ENCODE measurements at regions of chr19 and their contacts with region 1.

Region 1: DNA sequence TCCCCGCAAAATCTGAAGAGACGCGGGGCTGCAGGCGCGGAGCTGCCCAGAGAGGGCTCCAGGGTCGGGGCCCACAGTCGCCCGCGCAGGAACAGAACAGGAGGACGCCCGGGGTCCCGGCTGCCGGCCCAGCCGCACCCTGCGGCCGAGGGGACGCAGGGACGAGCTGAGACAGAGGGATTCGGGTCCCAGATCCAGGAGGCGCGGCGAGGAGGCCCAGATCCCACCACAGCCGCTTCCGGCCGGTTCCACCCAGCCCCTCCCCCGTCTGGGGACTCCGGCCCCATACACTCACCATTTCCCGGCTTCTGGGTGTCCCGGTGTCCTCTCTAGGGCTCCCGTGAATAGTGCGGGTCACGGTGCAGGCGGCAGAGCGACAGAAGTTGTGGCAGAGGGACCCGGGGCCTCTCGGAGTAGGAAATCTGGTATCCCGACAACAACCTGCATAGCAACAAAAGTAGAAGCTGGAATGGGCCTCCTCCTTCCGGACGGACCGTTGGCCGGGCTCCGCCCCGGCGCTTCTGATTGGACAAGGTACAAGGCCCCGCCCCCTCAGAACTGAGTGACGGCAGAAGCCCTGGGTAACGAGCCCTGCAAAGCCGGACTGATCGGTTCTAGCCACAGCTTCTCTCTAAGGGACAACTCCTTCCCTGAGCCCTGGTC is at the start of gene ZNF20:
- DNase-seq: peak; percentile 95
- ATAC-seq: peak; percentile 97
- H3K4me3 Mint-ChIP-seq: peak within 1 kb of the TSS; percentile 94
- H3K27ac Mint-ChIP-seq: peak within 1 kb of the TSS; percentile 87
- H3K4me1 Mint-ChIP-seq: peaks cover 35% of the 10 kb centered on the region
- H3K27me3 Mint-ChIP-seq: no peaks in the 10 kb centered on the region
- total RNA-seq, gene ZNF20: 3.2 to 4.1 TPM

Region 2: DNA sequence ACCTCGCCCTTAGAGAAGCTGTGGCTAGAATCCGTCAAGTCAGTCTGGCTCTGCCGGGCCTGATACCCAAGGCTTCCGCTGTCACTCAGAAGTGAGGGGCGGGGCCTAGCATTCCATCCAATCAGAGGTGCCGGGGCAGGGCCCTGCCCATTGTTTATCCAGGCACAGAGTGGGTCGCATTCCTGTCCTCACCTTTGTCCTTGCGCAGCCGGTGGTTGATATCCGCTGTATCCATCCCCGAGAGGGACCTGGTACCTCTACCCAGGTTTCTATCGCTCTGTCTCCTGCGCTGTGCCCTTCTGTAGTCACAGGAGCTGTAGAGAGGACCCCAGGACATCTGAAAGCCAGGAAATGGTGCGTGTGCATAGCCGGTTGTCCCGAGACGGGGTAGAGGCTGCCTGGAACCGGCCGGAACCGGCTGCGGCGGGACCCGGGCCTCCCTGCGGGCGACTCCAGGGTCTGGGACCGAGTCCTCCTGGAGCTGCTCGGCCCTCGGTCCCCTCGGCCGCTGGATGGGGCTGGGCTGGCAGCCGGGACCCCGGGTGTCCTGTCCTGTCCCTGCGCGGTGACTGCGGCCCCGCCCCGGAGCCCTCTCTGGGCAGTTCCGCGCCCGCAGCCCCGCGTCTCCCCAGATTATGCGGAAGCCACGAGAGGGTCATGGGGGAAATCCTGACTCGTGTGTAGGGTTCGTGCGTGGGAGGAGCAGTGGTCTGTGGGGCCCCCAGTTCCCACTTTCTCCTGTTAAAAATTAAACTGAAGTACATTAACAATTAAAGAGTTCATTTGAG is 175.0 kb before region 1 on chr19 and contains the start of gene ZNF763:
- CTCF ChIA-PET with region 1: interaction called, 24 read pairs
- POLR2A ChIA-PET with region 1: interaction called, 3 read pairs
- DNase-seq: peak; percentile 94
- ATAC-seq: peak; percentile 97
- H3K4me3 Mint-ChIP-seq: peak within 1 kb of the TSS; percentile 88
- H3K27ac Mint-ChIP-seq: peak within 1 kb of the TSS; percentile 88
- H3K4me1 Mint-ChIP-seq: peaks cover 27% of the 10 kb centered on the region
- H3K27me3 Mint-ChIP-seq: no peaks in the 10 kb centered on the region
- total RNA-seq, gene ZNF763: 2.0 to 2.3 TPM

Region 3: DNA sequence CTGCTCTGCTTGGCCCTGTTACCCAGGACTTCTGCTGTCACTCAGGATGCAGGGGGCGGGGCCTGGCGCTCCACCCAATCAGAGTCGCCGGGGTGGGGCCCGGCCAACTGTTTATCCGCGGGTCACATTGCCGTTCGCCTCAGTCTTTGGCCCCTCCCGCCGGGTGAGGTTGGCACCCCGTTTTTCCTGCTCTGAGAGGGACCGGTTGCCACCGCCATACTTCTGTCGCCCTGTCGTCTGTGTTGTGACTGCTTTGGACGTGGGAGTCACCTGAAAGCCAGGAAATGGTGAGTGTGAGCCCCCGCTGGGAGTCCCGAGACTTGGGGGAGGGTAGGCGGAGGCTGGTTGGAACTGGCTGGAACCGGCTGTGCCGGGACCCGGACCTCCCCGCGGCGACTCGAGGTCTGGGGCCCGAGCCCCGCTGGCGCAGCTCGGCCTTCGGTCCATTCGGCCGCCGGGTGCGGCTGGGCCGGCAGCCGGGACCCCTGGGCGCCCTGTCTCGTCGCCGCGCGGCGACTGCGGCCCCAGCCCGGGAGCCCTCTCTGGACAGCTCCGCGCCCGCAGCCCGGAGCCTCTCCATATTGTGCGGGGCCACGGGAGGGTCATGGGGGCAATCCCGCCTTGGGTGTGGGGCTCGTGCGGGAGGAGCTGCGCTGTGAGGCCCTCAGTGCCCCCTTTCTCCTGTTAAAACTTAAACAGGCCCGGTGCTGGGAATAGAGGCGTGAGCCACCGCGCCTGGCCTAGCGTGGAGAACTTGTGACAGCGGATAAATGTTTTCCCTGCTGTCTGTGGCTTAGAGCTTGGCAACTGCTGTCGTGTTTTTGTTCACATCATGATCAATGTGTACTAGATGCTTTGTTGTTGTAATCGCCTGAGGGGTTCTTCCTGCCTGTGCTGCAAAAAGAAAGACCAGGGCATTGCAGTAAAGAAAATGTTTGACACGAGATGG is 75.2 kb before region 1 on chr19 and contains the start of gene ZNF844:
- CTCF ChIA-PET with region 1: interaction called, 50 read pairs
- POLR2A ChIA-PET with region 1: interaction called, 9 read pairs
- DNase-seq: peak; percentile 78
- ATAC-seq: peak; percentile 79
- H3K4me3 Mint-ChIP-seq: peak within 1 kb of the TSS; percentile 79
- H3K27ac Mint-ChIP-seq: peak within 1 kb of the TSS; percentile 82
- H3K4me1 Mint-ChIP-seq: peaks cover 3% of the 10 kb centered on the region
- H3K27me3 Mint-ChIP-seq: no peaks in the 10 kb centered on the region
- total RNA-seq, gene ZNF844: 1.7 to 2.4 TPM

Region 4: DNA sequence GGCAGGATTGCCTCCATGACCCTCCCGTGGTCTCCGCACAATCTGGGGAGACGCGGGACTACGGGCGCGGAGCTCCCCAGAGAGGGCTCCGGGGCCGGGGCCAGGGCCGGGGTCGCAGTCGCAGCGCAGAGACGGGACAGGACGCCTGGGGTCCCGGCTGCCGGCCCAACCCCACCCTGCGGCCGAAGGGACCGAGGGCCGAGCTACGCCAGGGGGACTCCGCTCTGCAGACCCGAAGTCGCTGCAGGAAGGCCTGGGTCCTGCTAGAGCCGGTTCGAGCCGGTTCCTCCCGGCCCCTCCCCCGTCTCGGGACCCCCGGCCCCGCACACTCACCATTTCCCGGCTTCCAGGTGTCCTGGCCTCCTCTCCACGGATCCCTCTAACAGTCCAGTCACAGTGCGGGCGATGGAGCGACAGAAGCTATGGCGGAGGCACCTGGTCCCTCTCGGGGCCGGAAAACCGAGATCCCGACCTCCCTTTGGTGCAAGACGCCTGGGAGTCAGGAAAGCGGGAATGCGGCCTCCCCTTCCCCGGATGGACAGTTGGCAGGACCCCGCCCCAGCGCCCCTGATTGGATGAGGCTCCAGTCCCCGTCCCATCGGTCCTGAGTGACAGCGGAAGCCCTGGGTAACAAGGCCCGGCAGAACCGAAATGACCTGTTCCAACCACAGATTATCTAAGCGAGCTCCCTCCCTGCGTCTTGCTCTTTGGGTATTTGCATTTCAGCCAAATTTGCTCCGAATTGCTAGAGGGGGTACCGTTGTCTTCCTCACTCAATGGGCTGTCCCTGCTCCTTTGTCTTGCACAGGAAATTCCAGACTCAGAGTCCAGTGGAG is 16.4 kb after region 1 on chr19 and contains the start of gene ZNF625:
- CTCF ChIA-PET with region 1: interaction called, 10 read pairs
- POLR2A ChIA-PET with region 1: no interaction called
- DNase-seq: peak; percentile 63
- ATAC-seq: peak; percentile 71
- H3K4me3 Mint-ChIP-seq: peak within 1 kb of the TSS; percentile 87
- H3K27ac Mint-ChIP-seq: peak within 1 kb of the TSS; percentile 78
- H3K4me1 Mint-ChIP-seq: peaks cover 15% of the 10 kb centered on the region
- H3K27me3 Mint-ChIP-seq: peaks cover 3% of the 10 kb centered on the region
- total RNA-seq, gene ZNF625: 2.9 to 5.2 TPM

Region 5: GRCh38 chr19:12162882-12163806 is 23.1 kb after region 1 on chr19 and contains the start of gene ZNF136:
- CTCF ChIA-PET with region 1: interaction called, 10 read pairs
- POLR2A ChIA-PET with region 1: interaction called, 11 read pairs
- DNase-seq: peak; percentile 98
- ATAC-seq: peak; percentile 99
- H3K4me3 Mint-ChIP-seq: peak within 1 kb of the TSS; percentile 90
- H3K27ac Mint-ChIP-seq: peak within 1 kb of the TSS; percentile 94
- H3K4me1 Mint-ChIP-seq: peaks cover 42% of the 10 kb centered on the region
- H3K27me3 Mint-ChIP-seq: no peaks in the 10 kb centered on the region
- total RNA-seq, gene ZNF136: 13.9 to 14.7 TPM

Region 6: DNA sequence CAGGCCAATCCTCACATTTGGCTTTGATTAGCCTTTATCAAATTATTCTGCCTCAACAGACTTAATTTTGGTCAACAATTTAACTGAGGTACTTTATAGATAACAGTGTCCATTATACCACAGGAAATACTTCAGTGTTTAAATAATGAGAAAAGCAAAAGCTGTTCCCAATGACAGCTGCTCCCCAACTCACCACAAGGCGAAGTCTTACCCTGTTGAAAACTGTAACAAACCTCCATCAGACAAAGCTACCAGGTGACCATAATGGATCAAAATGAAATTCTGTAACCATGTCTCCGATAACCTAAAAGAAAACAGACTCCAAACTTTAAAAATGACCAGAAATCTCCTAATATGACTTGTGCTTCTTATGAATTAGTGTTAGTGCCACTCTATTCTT is 104.4 kb after region 1 on chr19:
- CTCF ChIA-PET with region 1: no interaction called
- POLR2A ChIA-PET with region 1: no interaction called
- DNase-seq: no peak
- ATAC-seq: no peak
- H3K4me3 Mint-ChIP-seq: no peak overlapping the region
- H3K27ac Mint-ChIP-seq: no peak overlapping the region
- H3K4me1 Mint-ChIP-seq: no peaks in the 10 kb centered on the region
- H3K27me3 Mint-ChIP-seq: no peaks in the 10 kb centered on the region